Activated naive CD4-positive, alpha-beta T cell treated with anti-CD3 and anti-CD28 coated beads for 36 hours (primary cell): ENCODE measurements at regions of chr14 and their contacts with region 1.

Region 1: DNA sequence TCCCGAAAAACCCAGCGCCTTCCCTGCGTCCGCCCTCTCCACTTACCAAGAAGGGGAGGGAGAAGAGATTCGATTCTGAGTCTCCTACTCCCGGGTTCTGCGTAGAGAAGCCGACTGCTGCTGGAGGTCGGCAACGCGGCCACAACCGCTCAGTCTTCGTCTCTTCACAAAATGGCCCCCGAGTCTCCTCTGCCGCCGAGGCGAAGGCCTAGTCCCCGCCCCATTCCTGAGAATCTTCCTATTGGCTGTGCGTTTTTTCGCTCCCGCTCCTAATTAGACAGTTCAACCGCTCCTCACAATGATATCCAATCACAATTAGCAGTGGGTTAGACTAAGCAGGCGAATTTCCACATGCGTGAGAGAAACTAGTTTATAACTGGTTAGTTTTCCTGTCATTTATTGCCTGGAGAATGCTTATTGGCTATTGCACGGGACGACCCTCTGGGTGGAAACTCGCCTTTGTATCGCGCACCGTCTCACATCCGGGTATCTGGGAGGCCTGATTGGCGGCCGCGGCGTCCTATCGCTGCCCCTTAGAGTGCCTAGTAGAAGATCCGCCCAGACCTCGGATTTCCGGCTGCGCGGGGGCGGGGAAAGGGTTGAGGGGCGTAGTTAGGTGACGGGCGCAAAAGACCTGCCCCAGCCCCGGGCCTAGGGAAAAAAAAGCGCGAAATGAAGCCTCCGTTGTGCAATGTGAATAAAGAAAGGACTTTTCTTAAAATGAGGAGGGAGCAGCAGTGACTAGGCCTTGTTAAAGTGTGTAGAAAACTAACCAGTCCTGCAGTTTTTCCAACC is at the start of gene HNRNPC:
- DNase-seq: peak; percentile 100
- H3K4me3 Mint-ChIP-seq: peak within 1 kb of the TSS; percentile 100
- H3K27ac Mint-ChIP-seq: peak within 1 kb of the TSS; percentile 100
- H3K4me1 Mint-ChIP-seq: peaks cover 25% of the 10 kb centered on the region
- H3K27me3 Mint-ChIP-seq: no peaks in the 10 kb centered on the region
- total RNA-seq, gene HNRNPC: 1,252 to 1,377 TPM

Region 2: GRCh38 chr14:20461274-20462001 is 808.0 kb before region 1 on chr14 and contains the start of gene PIP4P1:
- CTCF ChIA-PET with region 1: no interaction called
- intact Hi-C with region 1: loop called (anchors 5 kb)
- DNase-seq: peak; percentile 99
- H3K4me3 Mint-ChIP-seq: peak within 1 kb of the TSS; percentile 92
- H3K27ac Mint-ChIP-seq: peak within 1 kb of the TSS; percentile 96
- H3K4me1 Mint-ChIP-seq: peaks cover 29% of the 10 kb centered on the region
- H3K27me3 Mint-ChIP-seq: no peaks in the 10 kb centered on the region
- total RNA-seq, gene PIP4P1: 31.6 to 32.3 TPM

Region 3: DNA sequence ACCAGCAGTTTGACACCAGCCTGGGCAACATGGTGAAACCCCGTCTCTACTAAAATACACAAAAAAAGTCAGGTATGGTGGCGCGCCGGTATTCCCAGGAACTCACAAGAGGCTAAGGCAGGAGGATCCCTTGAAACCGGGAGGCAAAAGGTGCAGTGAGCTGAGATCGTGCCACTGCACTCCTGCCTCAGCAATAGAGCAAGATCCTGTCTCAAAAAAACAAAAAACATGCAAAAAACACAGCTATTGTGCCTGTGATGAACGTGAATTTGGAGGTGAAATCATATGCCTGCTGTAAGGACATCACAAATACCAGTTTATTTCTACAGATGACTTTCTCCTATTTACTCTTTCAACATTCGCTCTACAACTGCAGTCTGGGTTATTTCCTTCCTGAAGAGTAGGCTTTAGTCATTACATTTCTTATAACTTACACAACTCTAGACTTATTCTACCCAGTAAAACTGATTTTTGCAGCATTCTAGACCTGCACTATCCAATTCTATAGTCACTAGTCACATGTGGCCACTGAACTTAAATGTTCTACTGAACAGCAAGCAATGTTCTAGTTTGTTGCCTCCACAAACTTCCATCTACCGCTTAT is 48.5 kb before region 1 on chr14:
- CTCF ChIA-PET with region 1: no interaction called
- intact Hi-C with region 1: loop called (anchors 1 kb)
- DNase-seq: no peak
- H3K4me3 Mint-ChIP-seq: peak overlapping the region; percentile 42
- H3K27ac Mint-ChIP-seq: peak overlapping the region; percentile 89
- H3K4me1 Mint-ChIP-seq: peaks cover 87% of the 10 kb centered on the region
- H3K27me3 Mint-ChIP-seq: no peaks in the 10 kb centered on the region

Region 4: DNA sequence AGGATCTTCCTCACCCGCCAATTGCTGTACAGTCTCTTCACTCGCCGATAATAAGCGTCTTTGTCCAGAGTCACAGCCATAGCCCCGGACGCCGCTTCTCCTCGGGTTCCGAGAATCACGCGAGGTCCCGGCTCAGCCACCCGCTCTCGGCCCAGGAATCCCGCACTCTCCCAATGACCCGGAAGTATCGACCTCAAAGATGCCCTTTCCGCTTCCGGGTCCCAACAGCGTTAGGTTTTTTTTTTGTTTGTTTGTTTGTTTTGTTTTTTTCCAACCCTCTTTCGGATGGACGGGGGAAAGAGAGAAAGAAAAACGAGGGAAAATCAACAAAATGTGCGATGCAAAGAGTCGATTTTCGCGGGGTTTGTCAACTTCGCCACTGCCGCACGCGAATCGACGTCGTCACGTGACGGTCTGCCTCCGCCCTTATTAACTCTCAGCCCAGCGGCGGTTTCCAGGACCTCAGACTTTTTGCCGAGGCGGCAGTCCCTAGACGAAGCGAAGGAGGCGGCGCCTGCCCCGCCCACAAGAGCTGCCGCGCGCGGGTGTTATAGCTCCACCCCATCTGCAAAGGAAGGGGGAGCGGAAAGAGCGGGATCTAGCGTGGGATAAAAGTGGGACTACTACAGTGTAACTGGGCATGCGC is 114.5 kb after region 1 on chr14 and contains the start of gene SUPT16H:
- CTCF ChIA-PET with region 1: interaction called, 4 read pairs
- intact Hi-C with region 1: loop called (anchors 1 kb)
- DNase-seq: peak; percentile 97
- H3K4me3 Mint-ChIP-seq: peak within 1 kb of the TSS; percentile 98
- H3K27ac Mint-ChIP-seq: peak within 1 kb of the TSS; percentile 99
- H3K4me1 Mint-ChIP-seq: peaks cover 34% of the 10 kb centered on the region
- H3K27me3 Mint-ChIP-seq: no peaks in the 10 kb centered on the region
- total RNA-seq, gene SUPT16H: 164 to 165 TPM

Region 5: DNA sequence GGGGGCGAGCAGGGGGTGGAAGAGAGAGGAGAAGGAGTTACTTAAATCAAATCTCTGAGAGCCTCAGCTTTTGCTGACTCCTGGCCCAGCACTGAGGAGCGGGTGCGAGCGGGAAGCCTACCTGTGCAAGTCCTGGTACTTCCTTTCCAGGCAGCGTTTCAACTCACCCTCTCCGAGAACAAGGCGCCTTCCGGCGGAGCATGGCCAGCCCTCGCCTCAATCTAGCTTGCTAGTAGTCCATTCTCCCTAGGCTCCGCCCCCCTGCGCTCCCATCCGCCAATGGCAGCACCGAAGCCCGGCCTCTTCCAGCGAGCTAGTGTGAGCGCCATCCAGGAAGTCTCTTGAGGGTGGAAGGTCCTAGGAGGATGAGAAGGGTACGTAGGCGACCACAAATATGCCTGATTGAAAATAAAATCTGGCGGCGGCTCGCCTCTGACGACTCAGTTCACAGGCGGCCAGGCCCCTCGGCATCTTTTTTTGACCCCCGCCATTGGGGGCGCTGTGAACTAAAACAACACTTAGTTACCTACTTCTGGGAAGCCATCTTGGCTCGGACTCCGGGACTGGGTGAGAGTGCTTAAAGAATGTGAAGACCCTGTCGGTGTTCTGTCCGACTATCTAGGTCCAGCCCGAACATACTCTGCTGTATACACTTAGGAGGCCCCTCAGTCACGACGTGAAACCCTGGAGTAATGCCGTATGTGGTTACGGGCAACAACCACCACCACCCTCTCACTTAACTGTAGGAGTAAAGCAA is 186.6 kb after region 1 on chr14 and contains the start of gene CHD8:
- CTCF ChIA-PET with region 1: no interaction called
- intact Hi-C with region 1: loop called (anchors 1 kb)
- DNase-seq: peak; percentile 100
- H3K4me3 Mint-ChIP-seq: peak within 1 kb of the TSS; percentile 91
- H3K27ac Mint-ChIP-seq: peak within 1 kb of the TSS; percentile 98
- H3K4me1 Mint-ChIP-seq: peaks cover 37% of the 10 kb centered on the region
- H3K27me3 Mint-ChIP-seq: no peaks in the 10 kb centered on the region
- total RNA-seq, gene CHD8: 73.9 to 75.5 TPM

Region 6: DNA sequence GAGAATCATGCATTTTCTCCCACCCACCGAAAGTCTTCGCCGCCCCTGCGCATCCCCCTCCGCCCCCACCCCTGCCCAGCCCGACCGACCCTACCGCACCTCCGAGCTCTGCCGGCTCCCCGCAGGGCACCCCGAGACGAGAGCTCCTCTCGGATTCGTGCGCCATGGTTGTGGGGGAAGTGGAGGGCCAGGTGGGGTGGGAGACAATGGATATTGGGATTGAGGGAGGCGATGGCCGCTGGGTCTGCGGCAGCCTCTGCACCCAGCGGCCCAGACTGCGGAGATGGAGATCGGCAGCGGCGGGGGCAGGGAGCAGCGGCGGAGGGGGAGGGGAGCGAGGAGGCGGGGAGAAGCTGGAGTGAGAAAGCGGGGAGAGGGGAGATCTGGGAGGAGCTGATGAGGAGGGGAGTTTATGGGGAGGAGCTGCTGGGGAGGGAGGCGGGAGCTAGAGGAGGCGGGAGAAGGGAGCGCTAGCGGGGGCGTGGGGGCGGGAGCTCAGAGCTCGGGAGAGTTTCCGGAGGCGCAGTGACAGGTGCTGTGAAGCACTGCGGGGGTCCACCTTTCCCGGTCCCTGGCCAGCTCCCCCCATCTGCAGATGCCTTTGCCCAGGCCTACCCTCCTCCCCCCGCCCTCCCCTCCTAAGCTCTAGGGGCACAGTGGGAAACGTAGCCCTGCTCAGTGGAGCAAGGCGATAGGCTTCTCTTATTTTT is 256.7 kb after region 1 on chr14 and contains the start of gene SALL2:
- CTCF ChIA-PET with region 1: no interaction called
- intact Hi-C with region 1: loop called (anchors 1 kb)
- DNase-seq: peak; percentile 86
- H3K4me3 Mint-ChIP-seq: peak within 1 kb of the TSS; percentile 79
- H3K27ac Mint-ChIP-seq: peak within 1 kb of the TSS; percentile 70
- H3K4me1 Mint-ChIP-seq: peaks cover 9% of the 10 kb centered on the region
- H3K27me3 Mint-ChIP-seq: no peaks in the 10 kb centered on the region
- total RNA-seq, gene SALL2: 3.1 to 4.1 TPM

Region 7: GRCh38 chr14:22872033-22872832 is 1602.8 kb after region 1 on chr14:
- CTCF ChIA-PET with region 1: no interaction called
- intact Hi-C with region 1: loop called (anchors 5 kb)
- DNase-seq: peak; percentile 87
- H3K4me3 Mint-ChIP-seq: peak overlapping the region; percentile 91
- H3K27ac Mint-ChIP-seq: peak overlapping the region; percentile 100
- H3K4me1 Mint-ChIP-seq: peaks cover 29% of the 10 kb centered on the region
- H3K27me3 Mint-ChIP-seq: no peaks in the 10 kb centered on the region